ENCODE measurements at regions of chr4 and their contacts with region 1.

Region 1: GRCh38 chr4:184417802-184418511 is 56.4 kb downstream of the IRF2 start:
- DNase-seq: no peak
- ATAC-seq: peak; percentile 65
- H3K4me3 Mint-ChIP-seq: peak overlapping the region; percentile 55
- H3K27ac Mint-ChIP-seq: peak overlapping the region; percentile 89
- H3K4me1 Mint-ChIP-seq: peaks cover 81% of the 10 kb centered on the region
- H3K27me3 Mint-ChIP-seq: no peaks in the 10 kb centered on the region
- CTCF ChIP-seq: no peak

Region 2: DNA sequence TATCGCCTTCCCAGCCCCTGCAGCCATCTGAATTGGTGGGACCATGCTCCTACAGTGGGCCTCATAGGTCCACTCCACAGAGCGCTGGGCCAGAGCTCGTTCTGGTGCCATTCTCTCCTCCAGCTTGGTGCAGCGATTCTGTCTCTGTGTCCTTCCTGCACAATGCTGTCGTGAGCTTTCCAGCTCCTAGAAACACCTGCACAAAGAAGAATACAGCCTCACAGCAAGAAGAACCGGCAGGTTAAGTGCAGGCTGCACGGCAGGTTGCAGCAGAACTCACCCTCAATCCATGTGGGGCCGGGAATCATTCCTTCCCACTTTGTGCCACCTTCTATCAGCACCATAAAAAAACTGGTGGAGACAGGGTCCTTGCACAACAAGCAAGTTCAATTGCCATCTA is 99.1 kb before region 1 on chr4:
- CTCF ChIA-PET with region 1: no interaction called
- POLR2A ChIA-PET with region 1: interaction called, 4 read pairs
- intact Hi-C with region 1: loop called (anchors 2 kb)
- DNase-seq: no peak
- ATAC-seq: no peak
- H3K4me3 Mint-ChIP-seq: peak overlapping the region; percentile 24
- H3K27ac Mint-ChIP-seq: peak overlapping the region; percentile 98
- H3K4me1 Mint-ChIP-seq: peaks cover 73% of the 10 kb centered on the region
- H3K27me3 Mint-ChIP-seq: no peaks in the 10 kb centered on the region
- CTCF ChIP-seq: no peak

Region 3: DNA sequence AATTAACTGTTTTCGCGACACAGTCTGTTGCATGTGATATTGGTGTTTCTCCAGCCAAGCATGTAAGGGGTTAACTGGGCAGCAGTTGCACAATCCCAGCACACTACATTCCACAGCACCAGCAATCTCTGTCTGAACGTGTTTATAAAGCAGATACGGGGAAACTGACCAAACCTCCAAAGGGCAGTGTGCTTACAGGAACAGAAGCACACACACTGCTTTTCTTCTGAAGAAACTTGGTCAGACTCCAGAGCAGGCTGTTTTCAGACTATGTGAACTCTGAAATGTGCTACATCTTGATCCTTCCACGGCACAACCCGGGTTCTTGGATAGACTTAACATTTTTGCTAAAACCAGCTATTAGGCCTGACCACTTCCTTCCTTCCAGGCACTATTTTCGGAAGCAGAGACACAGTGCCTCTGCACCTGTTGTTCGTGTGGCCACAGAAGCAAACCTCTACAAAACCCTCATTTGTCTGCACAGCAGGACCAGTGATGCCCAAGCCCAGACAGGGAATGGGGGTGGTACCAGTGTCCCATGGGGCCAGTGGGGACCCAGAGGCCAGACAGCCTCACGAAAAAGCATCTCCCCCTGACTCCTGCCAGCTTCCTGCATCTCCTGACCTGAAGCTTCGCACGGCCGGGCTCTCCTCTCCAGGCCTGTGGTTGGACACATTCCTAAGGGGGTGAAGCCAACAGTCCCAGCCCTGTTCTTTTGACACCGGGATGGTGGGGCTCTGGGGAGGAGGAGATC is 33.7 kb before region 1 on chr4:
- CTCF ChIA-PET with region 1: no interaction called
- POLR2A ChIA-PET with region 1: interaction called, 5 read pairs
- intact Hi-C with region 1: loop called (anchors 5 kb)
- DNase-seq: no peak
- ATAC-seq: peak; percentile 36
- H3K4me3 Mint-ChIP-seq: peak overlapping the region; percentile 72
- H3K27ac Mint-ChIP-seq: peak overlapping the region; percentile 79
- H3K4me1 Mint-ChIP-seq: peaks cover 88% of the 10 kb centered on the region
- H3K27me3 Mint-ChIP-seq: no peaks in the 10 kb centered on the region
- CTCF ChIP-seq: no peak

Region 4: DNA sequence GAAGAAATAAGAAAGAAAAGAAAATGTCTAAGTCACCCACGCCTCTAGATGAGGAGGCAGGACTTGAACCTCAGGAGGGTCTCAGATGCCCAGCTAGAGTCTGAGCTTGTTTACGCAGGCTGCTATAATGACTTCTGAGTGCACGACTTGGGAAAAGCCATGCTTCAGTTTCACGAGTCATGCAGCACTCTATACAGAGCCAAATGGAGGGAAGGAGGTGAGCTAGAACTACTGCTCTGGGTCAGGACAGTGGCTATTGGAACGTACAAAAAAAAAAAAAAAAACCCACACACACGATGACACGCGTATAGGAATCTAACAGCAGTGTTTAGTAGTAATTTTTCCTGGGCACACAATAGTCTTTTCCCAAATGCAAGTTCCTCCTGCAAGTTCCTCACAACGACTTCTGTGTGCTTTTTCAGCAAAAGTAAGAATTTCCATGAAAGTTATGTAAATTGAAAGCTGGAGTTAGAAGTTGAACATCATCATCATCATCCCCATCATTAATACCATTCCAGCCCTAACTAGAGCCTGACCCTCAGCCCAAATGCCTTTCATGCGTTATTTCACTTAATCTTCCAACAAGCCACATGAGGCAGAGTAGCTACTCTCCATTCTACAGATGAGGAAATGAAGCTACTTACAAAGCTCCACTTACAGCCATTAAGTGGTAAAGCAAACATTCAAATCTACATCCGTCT is 19.8 kb after region 1 on chr4:
- CTCF ChIA-PET with region 1: no interaction called
- POLR2A ChIA-PET with region 1: interaction called, 4 read pairs
- intact Hi-C with region 1: loop called (anchors 2 kb)
- DNase-seq: no peak
- ATAC-seq: peak; percentile 79
- H3K4me3 Mint-ChIP-seq: no peak overlapping the region
- H3K27ac Mint-ChIP-seq: peak overlapping the region; percentile 72
- H3K4me1 Mint-ChIP-seq: peaks cover 73% of the 10 kb centered on the region
- H3K27me3 Mint-ChIP-seq: no peaks in the 10 kb centered on the region
- CTCF ChIP-seq: no peak

Region 5: DNA sequence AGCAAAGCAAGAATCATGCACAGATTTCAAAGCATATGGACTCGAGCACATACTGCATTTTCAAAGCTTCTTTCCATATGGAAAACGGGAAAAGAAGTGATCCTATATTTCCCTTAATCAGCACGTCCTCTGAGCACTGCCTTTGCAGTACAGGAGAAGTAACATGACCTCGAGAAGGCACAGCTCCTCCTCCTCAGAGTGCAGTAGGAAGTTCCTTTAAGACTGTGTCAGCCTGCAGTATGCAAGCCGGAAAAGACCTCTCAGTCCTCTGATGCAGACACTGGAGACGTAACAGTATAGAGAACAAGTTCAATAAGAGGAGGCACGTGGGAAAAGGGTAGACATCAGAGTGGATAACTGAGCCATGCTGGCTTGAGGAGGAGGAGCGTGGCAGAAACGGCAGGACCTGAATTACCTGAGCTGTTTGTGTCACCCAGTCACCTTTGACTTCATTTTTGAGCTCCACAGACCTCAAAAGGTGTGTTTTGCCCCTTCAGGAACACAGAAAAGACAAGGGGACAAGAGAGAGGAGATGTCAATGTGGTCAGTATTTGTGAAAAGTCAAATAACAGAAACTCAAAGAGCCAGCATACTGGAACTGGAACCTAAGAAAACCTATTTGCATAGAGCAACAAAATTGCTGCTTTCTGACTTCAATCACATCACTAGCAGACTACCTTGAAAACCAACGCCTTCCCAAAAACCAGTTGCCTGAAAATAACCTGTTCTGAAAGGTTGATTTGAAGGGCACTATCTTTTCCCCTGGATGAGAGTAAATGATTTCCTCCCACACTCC is 35.6 kb after region 1 on chr4:
- CTCF ChIA-PET with region 1: no interaction called
- POLR2A ChIA-PET with region 1: interaction called, 5 read pairs
- intact Hi-C with region 1: loop called (anchors 2 kb)
- DNase-seq: no peak
- ATAC-seq: peak; percentile 81
- H3K4me3 Mint-ChIP-seq: peak overlapping the region; percentile 65
- H3K27ac Mint-ChIP-seq: peak overlapping the region; percentile 87
- H3K4me1 Mint-ChIP-seq: peaks cover 91% of the 10 kb centered on the region
- H3K27me3 Mint-ChIP-seq: no peaks in the 10 kb centered on the region
- CTCF ChIP-seq: no peak